B cell (primary cell): ENCODE measurements at regions of chr16 and their contacts with region 1.

Region 1: GRCh38 chr16:50065624-50066481 is at the start of gene HEATR3:
- DNase-seq: peak; percentile 95
- ATAC-seq: peak; percentile 86
- H3K4me3 ChIP-seq: peak within 1 kb of the TSS; percentile 39 to 82 (median 75)
- H3K4me3 Mint-ChIP-seq: peak within 1 kb of the TSS; percentile 89
- H3K27ac ChIP-seq: peak within 1 kb of the TSS; percentile 47 to 63
- H3K27ac Mint-ChIP-seq: peak within 1 kb of the TSS; percentile 92
- H3K4me1 ChIP-seq: peaks cover 17 to 20% of the 10 kb centered on the region in 2 donors
- H3K4me1 Mint-ChIP-seq: peaks cover 35% of the 10 kb centered on the region
- H3K27me3 ChIP-seq: no peaks in the 10 kb centered on the region
- H3K27me3 Mint-ChIP-seq: no peaks in the 10 kb centered on the region
- CTCF ChIP-seq: no peak
- total RNA-seq, gene HEATR3: 21.0 and 21.2 TPM in 2 replicates

Region 2: DNA sequence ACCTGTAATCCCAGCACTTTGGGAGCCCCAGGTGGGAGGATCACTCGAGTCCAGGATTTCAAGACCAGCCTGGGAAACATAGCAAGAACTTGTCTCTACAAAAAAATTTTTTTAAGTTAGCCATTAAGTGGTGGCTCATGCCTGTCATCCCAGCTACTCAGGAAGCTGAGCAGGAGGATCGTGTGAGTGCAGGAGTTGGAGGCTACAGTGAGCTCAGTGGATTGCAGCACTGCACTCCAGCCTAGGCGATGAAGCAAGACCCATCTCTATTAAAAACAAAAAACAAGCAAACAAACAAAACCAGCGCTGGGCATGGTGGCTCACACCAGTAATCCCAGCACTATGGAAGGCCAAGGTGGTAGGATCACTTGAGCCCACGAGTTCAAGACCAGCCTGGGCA is 37.9 kb after region 1 on chr16:
- CTCF ChIA-PET with region 1: no interaction called
- POLR2A ChIA-PET with region 1: no interaction called
- intact Hi-C with region 1: no loop called
- DNase-seq: no peak
- ATAC-seq: no peak
- H3K4me3 ChIP-seq: no peak overlapping the region
- H3K4me3 Mint-ChIP-seq: no peak overlapping the region
- H3K27ac ChIP-seq: no peak overlapping the region
- H3K27ac Mint-ChIP-seq: no peak overlapping the region
- H3K4me1 ChIP-seq: no peaks in the 10 kb centered on the region
- H3K4me1 Mint-ChIP-seq: no peaks in the 10 kb centered on the region
- H3K27me3 ChIP-seq: no peaks in the 10 kb centered on the region
- H3K27me3 Mint-ChIP-seq: no peaks in the 10 kb centered on the region
- CTCF ChIP-seq: no peak

Region 3: DNA sequence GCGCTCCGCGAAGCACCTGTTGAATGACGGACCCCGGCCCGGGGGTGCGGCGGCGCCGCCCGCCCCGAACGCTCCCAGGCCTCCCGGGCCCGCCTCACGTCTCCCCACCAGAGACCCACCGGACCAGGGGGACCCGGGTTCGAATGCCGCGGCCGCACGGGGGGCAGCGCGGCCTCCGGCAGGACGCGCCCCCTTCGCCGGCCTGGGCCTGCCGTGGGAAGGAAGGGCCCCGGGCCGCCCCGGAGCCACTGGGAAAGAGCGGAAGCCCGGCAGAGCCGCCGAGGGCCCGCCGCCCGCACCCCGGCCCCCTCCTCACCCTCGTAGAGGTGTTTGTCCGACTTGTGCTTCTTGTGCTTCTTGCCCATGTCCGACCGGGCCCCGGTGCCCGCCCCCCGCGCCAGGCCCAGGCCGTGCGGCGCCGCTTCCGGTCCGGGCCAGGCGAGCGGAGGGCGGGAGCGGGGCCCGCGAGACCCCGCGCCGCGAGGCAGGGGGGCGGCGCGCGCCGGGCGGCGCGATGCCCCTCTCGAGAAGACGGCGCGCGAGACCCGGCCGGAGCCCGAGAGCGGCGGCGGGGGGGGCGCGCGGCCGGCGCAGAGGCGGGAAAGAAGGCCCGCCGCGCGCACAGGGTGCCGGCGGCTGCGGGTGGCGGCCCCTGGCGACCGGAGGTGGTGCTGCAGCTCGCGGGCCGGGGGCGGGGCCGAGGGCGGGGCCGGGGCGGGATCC is 302.7 kb after region 1 on chr16 and contains the start of gene BRD7:
- CTCF ChIA-PET with region 1: no interaction called
- POLR2A ChIA-PET with region 1: no interaction called
- intact Hi-C with region 1: loop called (anchors 1 kb)
- DNase-seq: peak; percentile 85
- ATAC-seq: peak; percentile 95
- H3K4me3 ChIP-seq: peak within 1 kb of the TSS; percentile 45 to 82 (median 66)
- H3K4me3 Mint-ChIP-seq: peak within 1 kb of the TSS; percentile 91
- H3K27ac ChIP-seq: peak within 1 kb of the TSS; percentile 57 to 88
- H3K27ac Mint-ChIP-seq: peak within 1 kb of the TSS; percentile 88
- H3K4me1 ChIP-seq: peaks cover 26 to 32% of the 10 kb centered on the region in 2 donors
- H3K4me1 Mint-ChIP-seq: peaks cover 41% of the 10 kb centered on the region
- H3K27me3 ChIP-seq: no peaks in the 10 kb centered on the region
- H3K27me3 Mint-ChIP-seq: peaks cover 4% of the 10 kb centered on the region
- CTCF ChIP-seq: peak; percentile 56
- total RNA-seq, gene BRD7: 64.5 and 69.7 TPM in 2 replicates